Activated CD4-positive, alpha-beta T cell treated with anti-CD3 and anti-CD28 coated beads for 36 hours (primary cell): ENCODE measurements at regions of chr13 and their contacts with region 1.

Region 1: DNA sequence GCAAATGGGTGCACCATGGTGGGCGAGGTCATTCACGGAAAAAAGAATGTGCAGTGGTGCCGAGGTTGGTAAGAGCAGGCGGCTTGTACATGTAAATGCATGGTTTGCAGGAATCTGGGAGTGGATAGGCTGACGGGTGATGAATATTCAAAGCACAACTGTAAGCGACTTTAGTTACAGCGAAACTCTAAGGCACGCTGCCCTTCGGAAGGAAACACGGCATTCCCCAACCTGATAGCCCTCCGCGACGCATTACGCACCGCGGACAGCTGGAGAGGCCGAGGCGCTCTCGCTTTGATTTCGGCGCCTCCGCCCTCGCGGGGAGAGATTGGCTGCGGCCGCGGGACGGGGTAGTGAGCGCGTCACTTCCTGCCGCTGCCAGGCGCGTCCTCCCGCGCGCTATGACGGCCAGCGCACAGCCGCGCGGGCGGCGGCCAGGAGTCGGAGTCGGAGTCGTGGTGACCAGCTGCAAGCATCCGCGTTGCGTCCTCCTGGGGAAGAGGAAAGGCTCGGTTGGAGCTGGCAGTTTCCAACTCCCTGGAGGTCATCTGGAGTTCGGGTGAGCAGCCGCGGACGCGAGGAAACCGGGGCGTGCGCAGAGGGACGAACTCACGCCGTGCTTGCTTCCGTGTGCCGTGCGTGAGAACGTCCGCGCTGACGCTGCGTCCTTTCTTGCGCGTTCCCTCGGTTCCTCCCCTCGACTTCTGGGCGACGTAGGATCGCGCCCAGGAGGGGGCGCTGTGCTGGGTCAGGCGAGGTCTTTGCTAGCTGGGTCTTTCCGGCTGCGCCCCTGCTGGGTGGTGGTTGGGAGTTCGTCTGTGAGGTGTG is at the start of gene NUDT15:
- DNase-seq: peak; percentile 98
- ATAC-seq: peak; percentile 89
- H3K4me3 Mint-ChIP-seq: peak within 1 kb of the TSS; percentile 97
- H3K27ac Mint-ChIP-seq: peak within 1 kb of the TSS; percentile 96
- H3K4me1 Mint-ChIP-seq: peaks cover 34% of the 10 kb centered on the region
- H3K27me3 Mint-ChIP-seq: no peaks in the 10 kb centered on the region
- total RNA-seq, gene NUDT15: 12.3 to 18.2 TPM

Region 2: GRCh38 chr13:47555235-47555634 is 482.3 kb before region 1 on chr13:
- CTCF ChIA-PET with region 1: no interaction called
- POLR2A ChIA-PET with region 1: no interaction called
- intact Hi-C with region 1: no loop called
- DNase-seq: no peak
- ATAC-seq: no peak
- H3K4me3 Mint-ChIP-seq: no peak overlapping the region
- H3K27ac Mint-ChIP-seq: no peak overlapping the region
- H3K4me1 Mint-ChIP-seq: no peaks in the 10 kb centered on the region
- H3K27me3 Mint-ChIP-seq: peaks cover 1% of the 10 kb centered on the region

Region 3: DNA sequence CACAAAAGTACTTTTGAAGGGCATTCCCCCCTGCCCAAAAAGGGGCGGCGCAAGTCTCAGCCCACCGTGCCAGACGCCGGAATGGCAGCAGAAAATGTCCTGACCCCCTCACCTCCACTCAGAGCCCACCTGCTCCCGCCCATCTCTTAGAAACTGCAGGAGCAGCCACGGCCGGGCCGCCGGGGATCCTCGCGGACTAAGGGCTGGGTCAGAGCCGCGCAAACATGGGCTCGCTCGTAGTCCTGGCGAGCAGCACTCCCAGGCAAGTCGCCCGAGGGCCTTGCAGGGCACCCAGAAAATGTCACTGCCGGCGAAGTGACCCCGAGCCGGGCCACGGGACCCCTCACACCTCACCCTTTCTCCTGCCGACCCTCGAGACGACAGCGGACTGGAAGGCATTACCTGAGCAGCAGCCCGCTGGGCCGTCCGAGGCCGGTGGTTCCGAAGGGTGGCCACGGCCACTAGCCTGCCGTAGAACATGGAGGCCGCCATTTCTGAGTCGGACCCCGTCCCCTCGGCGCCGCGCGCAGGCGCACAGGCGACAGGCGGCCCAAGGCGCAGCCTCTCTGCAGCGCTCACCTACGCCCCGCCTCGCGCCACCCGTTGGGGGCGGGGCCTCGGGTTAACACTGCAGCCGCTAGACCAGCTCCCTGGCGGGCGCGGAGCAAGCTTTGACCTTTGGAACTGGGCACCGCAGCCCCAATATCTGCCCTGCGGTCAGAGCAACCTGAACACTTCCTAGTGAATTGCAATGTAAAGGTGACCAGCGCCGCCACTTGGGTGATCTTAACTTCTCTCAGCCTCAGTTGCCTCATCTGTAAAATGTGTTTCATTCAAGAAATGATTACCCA is 36.6 kb before region 1 on chr13 and contains the start of gene SUCLA2:
- CTCF ChIA-PET with region 1: interaction called, 8 read pairs
- POLR2A ChIA-PET with region 1: interaction called, 4 read pairs
- intact Hi-C with region 1: loop called (anchors 1 kb)
- DNase-seq: peak; percentile 96
- ATAC-seq: peak; percentile 100
- H3K4me3 Mint-ChIP-seq: peak within 1 kb of the TSS; percentile 85
- H3K27ac Mint-ChIP-seq: peak within 1 kb of the TSS; percentile 95
- H3K4me1 Mint-ChIP-seq: peaks cover 31% of the 10 kb centered on the region
- H3K27me3 Mint-ChIP-seq: no peaks in the 10 kb centered on the region
- total RNA-seq, gene SUCLA2: 34.9 to 44.6 TPM

Region 4: GRCh38 chr13:48078251-48078656 is 40.7 kb after region 1 on chr13:
- CTCF ChIA-PET with region 1: interaction called, 12 read pairs
- POLR2A ChIA-PET with region 1: no interaction called
- intact Hi-C with region 1: no loop called
- DNase-seq: peak; percentile 40
- ATAC-seq: peak; percentile 87
- H3K4me3 Mint-ChIP-seq: no peak overlapping the region
- H3K27ac Mint-ChIP-seq: no peak overlapping the region
- H3K4me1 Mint-ChIP-seq: peaks cover 7% of the 10 kb centered on the region
- H3K27me3 Mint-ChIP-seq: no peaks in the 10 kb centered on the region

Region 5: DNA sequence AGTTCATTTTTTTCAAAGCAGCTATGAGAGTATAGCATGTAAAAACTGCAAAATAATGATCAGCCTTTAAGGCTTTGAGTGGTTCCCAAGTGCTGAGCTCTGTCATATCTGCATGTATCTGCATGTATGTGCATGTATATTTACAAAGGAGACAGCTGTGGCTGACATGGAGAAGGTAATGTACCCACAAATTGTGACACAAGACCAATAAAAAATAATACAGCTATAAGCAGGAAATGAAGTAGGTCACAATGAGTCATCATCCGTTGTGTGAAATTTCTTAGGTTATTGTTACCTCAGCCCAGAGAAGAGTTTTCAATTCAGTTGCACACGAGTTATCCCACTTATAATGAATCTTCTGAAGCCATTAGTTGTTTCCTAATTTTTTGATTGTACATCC is 118.3 kb after region 1 on chr13:
- CTCF ChIA-PET with region 1: no interaction called
- POLR2A ChIA-PET with region 1: no interaction called
- intact Hi-C with region 1: loop called in 1 of 2 experiments (anchors 2 kb)
- DNase-seq: peak; percentile 26
- ATAC-seq: peak; percentile 78
- H3K4me3 Mint-ChIP-seq: peak overlapping the region; percentile 54
- H3K27ac Mint-ChIP-seq: peak overlapping the region; percentile 96
- H3K4me1 Mint-ChIP-seq: peaks cover 87% of the 10 kb centered on the region
- H3K27me3 Mint-ChIP-seq: no peaks in the 10 kb centered on the region

Region 6: DNA sequence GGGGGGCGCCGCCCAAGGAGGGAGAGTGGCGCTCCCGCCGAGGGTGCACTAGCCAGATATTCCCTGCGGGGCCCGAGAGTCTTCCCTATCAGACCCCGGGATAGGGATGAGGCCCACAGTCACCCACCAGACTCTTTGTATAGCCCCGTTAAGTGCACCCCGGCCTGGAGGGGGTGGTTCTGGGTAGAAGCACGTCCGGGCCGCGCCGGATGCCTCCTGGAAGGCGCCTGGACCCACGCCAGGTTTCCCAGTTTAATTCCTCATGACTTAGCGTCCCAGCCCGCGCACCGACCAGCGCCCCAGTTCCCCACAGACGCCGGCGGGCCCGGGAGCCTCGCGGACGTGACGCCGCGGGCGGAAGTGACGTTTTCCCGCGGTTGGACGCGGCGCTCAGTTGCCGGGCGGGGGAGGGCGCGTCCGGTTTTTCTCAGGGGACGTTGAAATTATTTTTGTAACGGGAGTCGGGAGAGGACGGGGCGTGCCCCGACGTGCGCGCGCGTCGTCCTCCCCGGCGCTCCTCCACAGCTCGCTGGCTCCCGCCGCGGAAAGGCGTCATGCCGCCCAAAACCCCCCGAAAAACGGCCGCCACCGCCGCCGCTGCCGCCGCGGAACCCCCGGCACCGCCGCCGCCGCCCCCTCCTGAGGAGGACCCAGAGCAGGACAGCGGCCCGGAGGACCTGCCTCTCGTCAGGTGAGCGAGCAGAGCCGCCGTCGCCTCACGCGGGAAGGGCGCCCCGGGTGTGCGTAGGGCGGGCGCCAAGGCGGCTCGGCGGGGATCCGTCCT is 266.0 kb after region 1 on chr13 and contains the start of gene RB1:
- CTCF ChIA-PET with region 1: interaction called, 3 read pairs
- POLR2A ChIA-PET with region 1: no interaction called
- intact Hi-C with region 1: loop called (anchors 1 to 5 kb)
- DNase-seq: peak; percentile 94
- ATAC-seq: peak; percentile 81
- H3K4me3 Mint-ChIP-seq: peak within 1 kb of the TSS; percentile 81
- H3K27ac Mint-ChIP-seq: peak within 1 kb of the TSS; percentile 99
- H3K4me1 Mint-ChIP-seq: peaks cover 27% of the 10 kb centered on the region
- H3K27me3 Mint-ChIP-seq: no peaks in the 10 kb centered on the region
- total RNA-seq, gene RB1: 26.9 to 32.8 TPM

Region 7: GRCh38 chr13:48532506-48533499 is 495.2 kb after region 1 on chr13 and contains the start of gene RCBTB2:
- CTCF ChIA-PET with region 1: no interaction called
- POLR2A ChIA-PET with region 1: no interaction called
- intact Hi-C with region 1: loop called in 1 of 2 experiments (anchors 1 kb)
- DNase-seq: peak; percentile 99
- ATAC-seq: peak; percentile 93
- H3K4me3 Mint-ChIP-seq: peak within 1 kb of the TSS; percentile 92
- H3K27ac Mint-ChIP-seq: peak within 1 kb of the TSS; percentile 97
- H3K4me1 Mint-ChIP-seq: peaks cover 24% of the 10 kb centered on the region
- H3K27me3 Mint-ChIP-seq: no peaks in the 10 kb centered on the region
- total RNA-seq, gene RCBTB2: 1.1 to 1.6 TPM

Region 8: DNA sequence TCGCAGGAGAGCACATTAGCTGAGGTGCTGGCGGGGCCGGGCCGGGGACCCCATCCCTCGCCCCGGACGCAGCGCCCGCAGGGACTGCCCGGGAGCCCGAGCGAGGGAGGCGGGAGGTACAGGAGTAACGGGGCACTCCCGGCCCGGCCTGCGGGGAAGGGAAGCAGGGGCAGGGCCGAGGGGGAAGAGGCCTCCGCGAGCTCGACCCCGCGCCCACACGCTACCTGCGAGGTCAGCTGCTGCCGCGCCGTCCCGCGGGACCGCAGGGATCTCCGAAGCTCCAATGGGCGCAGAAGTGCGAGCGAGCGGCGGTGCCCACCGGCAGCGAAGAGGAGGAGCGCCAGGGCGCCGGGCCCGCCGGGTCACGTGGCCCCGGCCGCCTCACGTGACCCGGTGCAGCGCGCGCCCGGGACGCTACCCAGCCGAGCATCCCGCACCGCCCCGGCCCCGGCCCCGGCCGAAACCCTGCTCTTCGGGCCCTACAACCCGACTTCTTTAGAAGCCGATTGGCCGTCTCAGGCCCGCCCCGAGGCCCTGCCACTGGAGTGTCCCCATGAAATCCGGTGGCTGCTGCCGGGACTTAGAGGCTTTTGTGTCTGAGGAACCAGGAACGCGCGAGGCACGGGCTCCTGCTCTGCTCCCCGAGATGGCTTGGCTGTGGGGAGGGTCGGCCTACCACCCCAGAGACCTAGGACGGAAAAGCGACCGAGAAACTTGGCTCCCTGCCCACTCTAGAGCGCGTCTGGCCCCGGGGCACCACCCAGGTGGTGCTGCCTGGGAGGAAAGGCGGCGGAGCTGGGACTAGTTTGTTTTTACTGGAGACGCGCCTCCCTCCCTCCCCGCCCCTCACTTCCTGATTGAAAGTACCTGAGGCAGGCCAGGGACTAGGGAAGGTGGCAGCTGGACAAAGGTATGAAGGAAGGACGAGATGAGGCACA is 1547.9 kb after region 1 on chr13 and contains the start of gene RCBTB1:
- CTCF ChIA-PET with region 1: no interaction called
- POLR2A ChIA-PET with region 1: no interaction called
- intact Hi-C with region 1: loop called in 1 of 2 experiments (anchors 10 kb)
- DNase-seq: peak; percentile 80
- ATAC-seq: peak; percentile 95
- H3K4me3 Mint-ChIP-seq: peak within 1 kb of the TSS; percentile 99
- H3K27ac Mint-ChIP-seq: peak within 1 kb of the TSS; percentile 95
- H3K4me1 Mint-ChIP-seq: peaks cover 29% of the 10 kb centered on the region
- H3K27me3 Mint-ChIP-seq: no peaks in the 10 kb centered on the region
- total RNA-seq, gene RCBTB1: 9.8 to 14.9 TPM